Breast epithelium (tissue), 4 donors: ENCODE measurements at regions of chr4 and their contacts with region 1.

Region 1: DNA sequence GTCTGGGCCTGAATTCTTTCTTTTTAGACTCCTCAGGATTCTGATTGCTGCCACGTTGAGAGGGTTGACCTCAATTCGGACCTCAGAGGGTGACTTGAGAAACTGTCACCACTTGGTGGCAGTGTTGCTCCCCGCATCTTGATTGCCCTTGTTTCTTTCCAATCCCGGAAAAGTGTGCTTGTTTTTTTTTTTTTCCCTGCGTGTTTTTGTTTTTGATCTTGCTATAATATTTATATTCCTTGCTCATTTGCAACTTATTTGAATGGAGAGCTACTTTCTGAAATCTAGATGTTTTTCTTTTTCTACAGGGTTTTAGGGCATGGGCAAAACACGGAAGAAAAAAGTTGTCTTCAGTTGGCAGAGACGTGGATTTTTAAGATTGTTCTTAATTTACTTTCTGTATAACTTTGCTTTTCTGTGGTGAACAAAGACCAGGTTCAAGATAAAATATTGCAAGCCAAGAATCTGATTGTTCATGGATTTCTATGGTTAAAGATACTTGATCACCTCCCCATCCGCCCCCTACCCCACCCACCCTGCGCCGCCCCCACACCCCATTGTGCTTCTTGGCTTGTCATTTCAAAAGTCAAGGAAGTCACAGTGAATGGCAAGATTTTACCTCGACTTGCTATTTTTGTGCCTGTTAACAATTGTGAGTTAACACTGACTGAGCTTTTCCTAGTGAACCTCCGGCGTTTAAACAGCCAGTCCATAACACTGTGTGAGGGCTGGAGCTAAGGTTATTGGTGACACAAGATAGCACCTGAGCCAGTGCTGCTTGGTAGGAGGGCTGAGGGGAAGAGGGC is 102.1 kb downstream of the PTTG2 start:
- DNase-seq: peak; percentile 62 to 67
- H3K4me3 ChIP-seq: peak overlapping the region; percentile 24 to 57 (median 43)
- H3K27ac ChIP-seq: peak overlapping the region; percentile 21 to 59
- H3K4me1 ChIP-seq: no peaks in the 10 kb centered on the region
- H3K27me3 ChIP-seq: no peaks in the 10 kb centered on the region
- CTCF ChIP-seq: peak; percentile 61 to 81 (median 61)
- POLR2A ChIP-seq: no peak

Region 2: GRCh38 chr4:38673130-38673978 is 611.1 kb after region 1 on chr4:
- intact Hi-C with region 1: loop called (anchors 5 kb)
- DNase-seq: no peak
- H3K4me3 ChIP-seq: no peak overlapping the region
- H3K27ac ChIP-seq: peak overlapping the region; percentile 88 to 90
- H3K4me1 ChIP-seq: peaks cover 11 to 65% of the 10 kb centered on the region in 2 donors
- H3K27me3 ChIP-seq: no peaks in the 10 kb centered on the region
- CTCF ChIP-seq: no peak
- POLR2A ChIP-seq: no peak